Heart right ventricle (tissue), 16 donors: ENCODE measurements at regions of chr1 and their contacts with region 1.

Region 1: GRCh38 chr1:197486946-197487345 is 218.9 kb downstream of the CRB1 start:
- DNase-seq: peak in 1 of 2 donors; percentile 46
- ATAC-seq: peak; percentile 33 to 72 (median 56)
- H3K4me3 ChIP-seq: no peak overlapping the region
- H3K27ac ChIP-seq: no peak overlapping the region
- H3K4me1 ChIP-seq: no peaks in the 10 kb centered on the region
- H3K27me3 ChIP-seq: no peaks in the 10 kb centered on the region
- CTCF ChIP-seq: no peak

Region 2: DNA sequence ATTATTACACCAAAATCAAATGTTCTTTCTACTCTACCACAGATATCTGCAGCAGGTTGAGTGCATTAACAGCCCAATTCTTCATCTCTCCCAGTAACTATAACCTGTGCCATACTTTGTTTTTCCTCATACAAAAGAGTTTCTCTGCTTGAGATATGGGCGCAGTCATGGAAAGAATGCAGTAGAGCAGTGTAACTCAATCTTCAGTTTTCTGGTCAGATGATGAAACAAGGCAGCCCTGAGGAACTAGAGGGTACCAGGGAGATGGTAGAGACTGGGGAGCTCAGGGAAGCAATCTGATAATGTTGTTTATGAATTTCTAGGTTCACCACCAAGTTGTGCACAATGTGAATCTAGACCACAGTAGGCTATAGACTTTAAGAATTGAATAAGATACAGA is 380.1 kb before region 1 on chr1:
- intact Hi-C with region 1: loop called in 1 of 10 experiments (anchors 5 kb)
- DNase-seq: no peak
- ATAC-seq: no peak
- H3K4me3 ChIP-seq: no peak overlapping the region
- H3K27ac ChIP-seq: no peak overlapping the region
- H3K4me1 ChIP-seq: peaks cover 0 to 9% (median 0%) of the 10 kb centered on the region in 9 donors
- H3K27me3 ChIP-seq: no peaks in the 10 kb centered on the region
- CTCF ChIP-seq: no peak

Region 3: GRCh38 chr1:197343663-197344273 is 143.2 kb before region 1 on chr1:
- intact Hi-C with region 1: no loop called
- DNase-seq: no peak
- ATAC-seq: peak in 1 of 8 donors; percentile 78
- H3K4me3 ChIP-seq: no peak overlapping the region
- H3K27ac ChIP-seq: no peak overlapping the region
- H3K4me1 ChIP-seq: no peaks in the 10 kb centered on the region
- H3K27me3 ChIP-seq: no peaks in the 10 kb centered on the region
- CTCF ChIP-seq: no peak

Region 4: DNA sequence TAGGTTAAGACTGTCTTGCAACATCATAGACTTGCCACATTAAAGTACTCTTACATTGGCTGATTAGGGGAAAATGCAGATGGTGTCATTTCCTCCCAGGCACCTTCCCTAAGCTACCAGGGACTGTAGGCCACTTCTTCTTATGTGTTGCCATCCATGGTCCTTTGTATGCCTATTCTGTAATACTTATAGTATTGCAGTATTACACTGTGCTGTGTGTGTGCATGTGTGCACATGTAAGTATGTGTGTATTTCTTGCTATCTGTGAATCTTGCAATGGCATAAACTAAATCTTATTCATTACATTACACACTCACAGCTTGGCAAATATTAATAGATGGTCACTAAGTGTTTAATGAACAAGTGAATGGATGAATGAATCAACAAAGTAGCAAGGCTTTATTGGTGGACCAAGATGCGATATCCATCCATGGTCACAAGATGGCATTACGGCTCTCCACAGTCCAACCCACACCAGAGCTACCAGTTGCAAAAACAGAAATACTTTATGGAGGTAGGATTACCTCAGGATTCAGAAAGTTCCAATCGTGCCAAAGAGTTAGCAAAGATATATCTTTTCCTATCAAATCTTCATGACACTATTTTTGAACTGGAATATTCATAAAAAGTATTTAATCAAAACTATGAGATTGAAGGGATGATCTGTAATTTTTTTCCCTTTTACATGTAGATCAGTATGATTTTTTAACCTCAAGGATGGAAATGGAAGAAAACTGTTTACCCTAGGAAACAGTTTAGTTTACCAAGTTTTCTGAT is 128.2 kb after region 1 on chr1:
- intact Hi-C with region 1: no loop called
- DNase-seq: no peak
- ATAC-seq: peak in 6 of 8 donors; percentile 43 to 81 (median 55)
- H3K4me3 ChIP-seq: no peak overlapping the region
- H3K27ac ChIP-seq: no peak overlapping the region
- H3K4me1 ChIP-seq: peaks cover 0 to 23% (median 10%) of the 10 kb centered on the region in 9 donors
- H3K27me3 ChIP-seq: no peaks in the 10 kb centered on the region
- CTCF ChIP-seq: peak in 8 of 9 donors; percentile 19 to 72 (median 62)